Endothelial cell of umbilical vein (primary cell): ENCODE measurements at regions of chr12 and their contacts with region 1.

Region 1: DNA sequence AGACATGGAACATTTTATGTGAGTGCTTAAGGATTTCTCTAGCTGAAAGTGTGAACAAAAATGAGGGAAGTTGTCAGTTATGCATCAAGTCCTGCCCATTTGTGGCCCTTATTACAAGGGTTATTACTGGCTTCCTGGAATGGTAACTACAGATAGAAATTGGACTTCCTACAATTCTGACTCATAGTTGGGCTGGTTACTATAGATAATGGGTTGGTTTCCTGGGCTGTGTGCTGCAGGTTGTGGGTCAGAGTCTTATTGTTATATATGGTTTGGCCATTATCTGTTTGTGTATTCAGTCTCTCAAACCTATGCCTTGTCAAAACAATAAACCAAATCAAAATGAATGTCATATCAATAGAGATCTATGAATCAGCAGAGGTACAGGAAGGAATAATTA is 313.7 kb downstream of the ADAMTS20 start:
- DNase-seq: peak; percentile 99
- H3K4me3 ChIP-seq: no peak overlapping the region
- H3K27ac ChIP-seq: peak overlapping the region; percentile 95
- H3K4me1 ChIP-seq: peaks cover 54% of the 10 kb centered on the region
- H3K27me3 ChIP-seq: no peaks in the 10 kb centered on the region
- CTCF ChIP-seq: no peak
- POLR2A ChIP-seq: peak; percentile 94

Region 2: GRCh38 chr12:42638011-42638410 is 600.3 kb before region 1 on chr12:
- CTCF ChIA-PET with region 1: no interaction called
- POLR2A ChIA-PET with region 1: no interaction called
- dilution Hi-C with region 1: no loop called
- intact Hi-C with region 1: loop called (anchors 1 kb)
- DNase-seq: peak; percentile 89
- H3K4me3 ChIP-seq: peak overlapping the region in 1 of 3 experiments; percentile 38
- H3K27ac ChIP-seq: peak overlapping the region; percentile 64
- H3K4me1 ChIP-seq: peaks cover 6% of the 10 kb centered on the region
- H3K27me3 ChIP-seq: no peaks in the 10 kb centered on the region
- CTCF ChIP-seq: no peak
- POLR2A ChIP-seq: no peak

Region 3: GRCh38 chr12:42859612-42860011 is 378.7 kb before region 1 on chr12:
- CTCF ChIA-PET with region 1: no interaction called
- POLR2A ChIA-PET with region 1: no interaction called
- dilution Hi-C with region 1: no loop called
- intact Hi-C with region 1: no loop called
- DNase-seq: no peak
- H3K4me3 ChIP-seq: no peak overlapping the region
- H3K27ac ChIP-seq: no peak overlapping the region
- H3K4me1 ChIP-seq: no peaks in the 10 kb centered on the region
- H3K27me3 ChIP-seq: no peaks in the 10 kb centered on the region
- CTCF ChIP-seq: no peak
- POLR2A ChIP-seq: no peak

Region 4: DNA sequence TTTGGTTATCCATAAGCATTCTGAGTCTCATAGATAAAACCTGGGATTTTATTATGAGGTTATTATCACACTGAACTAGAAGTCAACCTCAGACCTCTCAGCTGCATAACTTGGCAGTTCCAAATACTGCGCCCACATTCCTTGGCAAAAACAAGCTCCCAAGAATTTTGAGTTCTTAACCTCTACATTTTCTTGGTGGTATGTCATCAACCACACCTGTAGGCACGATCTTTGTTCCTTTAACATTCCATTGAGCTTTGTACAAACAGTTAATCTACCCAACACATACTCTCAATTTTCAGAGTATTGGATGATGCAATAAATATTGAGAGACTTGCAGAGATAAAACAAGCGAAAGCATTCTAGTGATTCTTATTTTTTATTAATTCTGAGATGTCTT is 276.9 kb before region 1 on chr12:
- CTCF ChIA-PET with region 1: interaction called, 7 read pairs
- POLR2A ChIA-PET with region 1: interaction called, 6 read pairs
- dilution Hi-C with region 1: no loop called
- intact Hi-C with region 1: loop called (anchors 1 kb)
- DNase-seq: peak; percentile 89
- H3K4me3 ChIP-seq: no peak overlapping the region
- H3K27ac ChIP-seq: peak overlapping the region; percentile 81
- H3K4me1 ChIP-seq: peaks cover 72% of the 10 kb centered on the region
- H3K27me3 ChIP-seq: no peaks in the 10 kb centered on the region
- CTCF ChIP-seq: no peak
- POLR2A ChIP-seq: peak; percentile 81

Region 5: DNA sequence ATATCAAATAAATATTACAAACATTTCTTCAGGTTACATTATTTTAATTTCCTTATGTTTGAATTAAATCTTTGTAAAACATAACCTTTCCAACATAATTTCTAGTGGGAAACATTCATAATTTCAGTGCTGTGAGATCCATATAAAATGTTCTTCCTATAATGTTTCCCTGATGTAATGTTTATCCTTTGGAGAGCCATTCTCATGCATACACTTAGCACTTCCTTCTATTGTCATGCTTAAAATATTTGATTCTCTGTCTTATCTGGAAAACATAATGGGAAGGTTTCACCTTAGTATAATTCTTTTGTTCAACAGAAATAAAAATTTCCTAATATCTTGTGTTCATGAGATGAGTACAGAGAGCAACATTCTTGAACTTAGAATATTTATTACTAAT is 158.8 kb before region 1 on chr12:
- CTCF ChIA-PET with region 1: no interaction called
- POLR2A ChIA-PET with region 1: no interaction called
- dilution Hi-C with region 1: no loop called
- intact Hi-C with region 1: loop called (anchors 1 kb)
- DNase-seq: peak; percentile 85
- H3K4me3 ChIP-seq: peak overlapping the region in 1 of 3 experiments; percentile 18
- H3K27ac ChIP-seq: peak overlapping the region; percentile 93
- H3K4me1 ChIP-seq: peaks cover 27% of the 10 kb centered on the region
- H3K27me3 ChIP-seq: no peaks in the 10 kb centered on the region
- CTCF ChIP-seq: no peak
- POLR2A ChIP-seq: no peak

Region 6: DNA sequence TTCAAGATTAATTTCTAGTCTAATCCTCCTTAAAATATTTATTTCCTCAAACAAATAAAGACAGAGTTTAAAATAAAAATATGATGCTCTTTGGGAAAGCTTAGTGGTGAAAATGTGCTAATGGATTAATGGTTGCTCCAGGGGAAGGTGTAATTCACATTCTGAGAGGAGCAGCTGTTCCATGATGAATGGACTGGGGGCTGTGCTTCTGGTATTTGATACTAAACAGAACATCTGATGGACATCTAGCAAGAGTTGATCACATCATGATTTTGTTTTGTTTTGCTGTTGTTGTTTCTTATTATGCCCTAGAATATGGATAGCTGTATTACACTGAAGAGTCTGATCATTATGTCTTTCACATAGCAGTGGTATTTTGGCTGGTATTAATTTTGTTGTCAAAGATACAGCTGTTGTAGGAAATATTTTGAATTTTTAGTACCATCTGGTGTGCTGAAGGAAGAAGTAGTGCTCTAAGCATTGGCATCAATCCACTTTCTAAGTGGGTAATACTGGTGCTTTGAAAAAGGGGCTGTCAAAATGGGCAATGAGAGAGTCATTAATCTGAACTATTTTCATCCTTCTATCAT is 17.3 kb after region 1 on chr12:
- CTCF ChIA-PET with region 1: no interaction called
- POLR2A ChIA-PET with region 1: no interaction called
- dilution Hi-C with region 1: no loop called
- intact Hi-C with region 1: no loop called
- DNase-seq: no peak
- H3K4me3 ChIP-seq: no peak overlapping the region
- H3K27ac ChIP-seq: no peak overlapping the region
- H3K4me1 ChIP-seq: no peaks in the 10 kb centered on the region
- H3K27me3 ChIP-seq: no peaks in the 10 kb centered on the region
- CTCF ChIP-seq: no peak
- POLR2A ChIP-seq: no peak